ENCODE measurements at regions of chr6 and their contacts with region 1.

Region 1: DNA sequence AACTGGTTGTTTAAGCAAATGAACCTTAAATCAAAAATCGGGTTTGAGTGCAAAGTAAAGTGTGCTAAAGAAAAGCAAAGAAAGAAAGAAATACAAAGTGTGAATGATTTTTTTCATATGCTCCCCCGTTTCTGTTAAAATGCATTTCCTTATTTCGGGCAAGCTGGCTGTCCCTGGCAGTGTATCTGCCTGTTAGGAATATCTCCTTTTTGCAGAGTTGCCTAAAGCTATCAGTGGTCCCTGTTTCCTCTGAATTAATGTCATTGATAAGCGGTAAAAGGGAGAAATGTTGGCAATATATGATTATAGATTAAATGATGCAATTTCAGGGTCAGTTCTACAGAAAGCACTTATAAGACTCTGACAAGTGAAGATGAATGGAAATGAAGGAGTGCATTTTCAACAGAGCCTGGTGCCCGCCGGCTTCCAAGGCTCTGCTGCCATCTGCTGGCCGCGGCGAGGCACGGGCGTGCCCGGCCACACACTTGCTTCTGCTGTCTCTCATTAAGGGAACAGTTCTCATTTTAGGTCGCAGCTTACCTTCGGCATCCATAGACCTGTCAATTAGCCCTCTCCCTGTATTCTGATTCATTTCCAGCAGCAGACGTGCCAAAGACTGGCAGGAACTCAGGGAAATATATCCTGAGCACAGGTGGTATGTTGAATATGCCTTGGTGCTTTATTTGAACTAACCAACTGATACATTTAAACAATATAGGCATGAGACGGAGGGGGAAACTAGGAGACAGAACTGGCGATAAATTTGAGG is 381.9 kb downstream of the C6orf118 start:
- DNase-seq: peak; percentile 62
- H3K4me3 Mint-ChIP-seq: no peak overlapping the region
- H3K27ac Mint-ChIP-seq: no peak overlapping the region
- H3K4me1 Mint-ChIP-seq: no peaks in the 10 kb centered on the region
- H3K27me3 Mint-ChIP-seq: no peaks in the 10 kb centered on the region
- CTCF ChIP-seq: peak; percentile 95

Region 2: GRCh38 chr6:163180874-163181541 is 1746.5 kb before region 1 on chr6:
- CTCF ChIA-PET with region 1: no interaction called
- POLR2A ChIA-PET with region 1: no interaction called
- intact Hi-C with region 1: loop called (anchors 1 kb)
- DNase-seq: peak; percentile 73
- H3K4me3 Mint-ChIP-seq: no peak overlapping the region
- H3K27ac Mint-ChIP-seq: peak overlapping the region; percentile 65
- H3K4me1 Mint-ChIP-seq: no peaks in the 10 kb centered on the region
- H3K27me3 Mint-ChIP-seq: no peaks in the 10 kb centered on the region
- CTCF ChIP-seq: peak; percentile 44

Region 3: GRCh38 chr6:163956571-163957407 is 970.7 kb before region 1 on chr6:
- CTCF ChIA-PET with region 1: interaction called, 10 read pairs
- POLR2A ChIA-PET with region 1: no interaction called
- intact Hi-C with region 1: loop called (anchors 2 kb)
- DNase-seq: peak; percentile 86
- H3K4me3 Mint-ChIP-seq: no peak overlapping the region
- H3K27ac Mint-ChIP-seq: no peak overlapping the region
- H3K4me1 Mint-ChIP-seq: peaks cover 11% of the 10 kb centered on the region
- H3K27me3 Mint-ChIP-seq: no peaks in the 10 kb centered on the region
- CTCF ChIP-seq: peak; percentile 79

Region 4: DNA sequence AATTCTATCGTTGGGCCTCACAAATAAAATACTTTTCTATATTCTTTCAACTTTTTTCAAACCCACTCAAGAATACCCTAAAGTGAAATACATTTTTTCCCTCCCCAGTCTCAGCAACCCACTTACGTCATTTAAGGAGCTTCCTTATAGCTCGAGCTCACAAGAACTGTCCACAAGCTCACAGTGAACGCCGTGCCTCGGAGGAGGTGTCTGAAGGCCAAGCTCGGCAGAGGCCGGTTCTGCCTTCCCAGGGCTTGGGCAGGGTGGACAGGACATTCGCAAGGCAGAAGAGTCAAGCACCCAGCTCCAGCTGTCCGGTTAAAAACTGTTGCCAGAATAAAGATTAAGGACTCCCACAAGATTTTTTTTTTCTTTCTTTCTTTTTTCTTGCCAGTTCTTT is 710.6 kb before region 1 on chr6:
- CTCF ChIA-PET with region 1: no interaction called
- POLR2A ChIA-PET with region 1: no interaction called
- intact Hi-C with region 1: loop called (anchors 2 kb)
- DNase-seq: no peak
- H3K4me3 Mint-ChIP-seq: no peak overlapping the region
- H3K27ac Mint-ChIP-seq: no peak overlapping the region
- H3K4me1 Mint-ChIP-seq: no peaks in the 10 kb centered on the region
- H3K27me3 Mint-ChIP-seq: no peaks in the 10 kb centered on the region
- CTCF ChIP-seq: no peak

Region 5: GRCh38 chr6:164795056-164795815 is 132.2 kb before region 1 on chr6:
- CTCF ChIA-PET with region 1: no interaction called
- POLR2A ChIA-PET with region 1: no interaction called
- intact Hi-C with region 1: no loop called
- DNase-seq: no peak
- H3K4me3 Mint-ChIP-seq: no peak overlapping the region
- H3K27ac Mint-ChIP-seq: no peak overlapping the region
- H3K4me1 Mint-ChIP-seq: no peaks in the 10 kb centered on the region
- H3K27me3 Mint-ChIP-seq: no peaks in the 10 kb centered on the region
- CTCF ChIP-seq: no peak

Region 6: GRCh38 chr6:165231581-165232561 is 304.4 kb after region 1 on chr6:
- CTCF ChIA-PET with region 1: interaction called, 43 read pairs
- POLR2A ChIA-PET with region 1: interaction called, 13 read pairs
- intact Hi-C with region 1: loop called (anchors 1 kb)
- DNase-seq: peak; percentile 69
- H3K4me3 Mint-ChIP-seq: no peak overlapping the region
- H3K27ac Mint-ChIP-seq: peak overlapping the region; percentile 20
- H3K4me1 Mint-ChIP-seq: peaks cover 18% of the 10 kb centered on the region
- H3K27me3 Mint-ChIP-seq: no peaks in the 10 kb centered on the region
- CTCF ChIP-seq: peak; percentile 83

Measured in MCF 10A (cell line).